Spleen (tissue), 13 donors: ENCODE measurements at regions of chr5 and their contacts with region 1.

Region 1: DNA sequence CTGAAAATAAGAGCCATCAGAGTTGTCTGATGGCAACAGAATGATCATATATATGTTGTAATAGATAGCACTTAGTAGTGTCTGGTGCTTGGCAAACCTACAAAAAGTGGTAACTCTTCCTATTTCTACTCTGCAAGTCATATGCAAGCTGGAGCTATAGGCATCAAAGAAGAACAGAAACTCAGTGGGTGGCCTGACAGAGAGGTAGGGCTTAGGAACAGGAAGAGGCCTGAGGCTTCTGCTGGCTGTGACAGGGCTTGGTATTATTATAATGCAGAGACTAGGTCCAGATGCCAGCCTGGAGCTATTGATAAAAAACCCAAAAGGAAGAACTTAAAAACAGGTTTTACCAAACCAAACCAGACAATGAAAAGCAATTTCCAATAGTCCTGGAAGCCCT is 4.4 kb upstream of the DIAPH1 start:
- DNase-seq: no peak
- H3K4me3 ChIP-seq: no peak overlapping the region
- H3K27ac ChIP-seq: peak overlapping the region in 6 of 8 donors; percentile 27 to 78 (median 74)
- H3K4me1 ChIP-seq: peaks cover 0 to 35% (median 22%) of the 10 kb centered on the region in 6 donors
- H3K27me3 ChIP-seq: no peaks in the 10 kb centered on the region
- CTCF ChIP-seq: no peak
- POLR2A ChIP-seq: no peak

Region 2: GRCh38 chr5:141369994-141370848 is 253.0 kb before region 1 on chr5 and contains the start of gene PCDHGB3:
- intact Hi-C with region 1: no loop called
- DNase-seq: no peak
- H3K4me3 ChIP-seq: peak within 1 kb of the TSS in 5 of 8 donors; percentile 15 to 61 (median 23)
- H3K27ac ChIP-seq: no peak within 1 kb of the TSS
- H3K4me1 ChIP-seq: no peaks in the 10 kb centered on the region
- H3K27me3 ChIP-seq: peaks cover 0 to 97% (median 21%) of the 10 kb centered on the region in 7 donors
- CTCF ChIP-seq: peak in 3 of 11 experiments; percentile 10 to 30 (median 21)
- POLR2A ChIP-seq: no peak
- total RNA-seq, gene PCDHGB3: 1.3 to 5.0 (median 3.9) TPM

Region 3: GRCh38 chr5:141517880-141518617 is 105.1 kb before region 1 on chr5:
- intact Hi-C with region 1: no loop called
- DNase-seq: peak; percentile 21
- H3K4me3 ChIP-seq: no peak overlapping the region
- H3K27ac ChIP-seq: peak overlapping the region in 4 of 8 donors; percentile 13 to 87 (median 44)
- H3K4me1 ChIP-seq: peaks cover 16 to 100% (median 63%) of the 10 kb centered on the region in 6 donors
- H3K27me3 ChIP-seq: no peaks in the 10 kb centered on the region
- CTCF ChIP-seq: no peak
- POLR2A ChIP-seq: no peak

Region 4: DNA sequence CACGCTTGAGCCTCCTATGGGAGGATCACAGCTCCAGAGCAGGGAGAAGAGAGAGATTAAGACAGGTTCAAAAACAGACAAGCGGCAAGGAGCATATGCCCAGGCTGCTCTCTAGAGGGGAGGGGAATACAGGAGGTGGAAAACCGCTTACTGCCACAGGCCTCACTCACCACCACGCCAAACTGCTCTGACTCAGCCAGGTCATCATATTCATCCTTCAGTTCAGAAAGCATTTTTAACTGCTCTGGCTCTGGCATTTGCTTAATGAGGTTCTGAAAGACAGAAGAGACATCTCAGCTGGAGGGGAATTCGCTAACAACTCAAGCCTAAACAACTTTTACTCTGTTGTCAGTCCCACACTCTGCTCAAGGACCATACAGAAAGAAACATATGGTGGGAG is 94.2 kb before region 1 on chr5:
- intact Hi-C with region 1: no loop called
- DNase-seq: no peak
- H3K4me3 ChIP-seq: no peak overlapping the region
- H3K27ac ChIP-seq: peak overlapping the region in 5 of 8 donors; percentile 0 to 45 (median 29)
- H3K4me1 ChIP-seq: peaks cover 7 to 48% (median 27%) of the 10 kb centered on the region in 6 donors
- H3K27me3 ChIP-seq: no peaks in the 10 kb centered on the region
- CTCF ChIP-seq: no peak
- POLR2A ChIP-seq: no peak

Region 5: DNA sequence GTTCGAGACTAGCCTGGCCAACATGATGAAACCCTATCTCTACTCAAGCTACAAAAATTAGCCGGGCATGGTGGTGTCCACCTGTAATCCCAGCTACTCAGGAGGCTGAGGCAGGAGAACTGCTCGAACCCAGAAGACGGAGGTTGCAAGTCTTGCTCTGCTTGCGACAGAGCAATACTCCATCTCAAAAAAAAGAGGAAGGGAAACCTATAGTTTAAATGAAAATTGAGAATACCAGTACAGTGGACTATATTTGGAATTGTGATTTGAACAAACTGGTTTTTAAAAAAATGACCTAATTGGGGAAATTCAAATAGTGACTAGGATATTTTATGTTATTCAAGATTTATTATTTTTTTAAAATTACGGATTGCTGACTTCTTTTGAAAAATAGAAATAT is 37.6 kb before region 1 on chr5:
- intact Hi-C with region 1: loop called (anchors 5 kb)
- DNase-seq: no peak
- H3K4me3 ChIP-seq: no peak overlapping the region
- H3K27ac ChIP-seq: no peak overlapping the region
- H3K4me1 ChIP-seq: peaks cover 0 to 47% (median 5%) of the 10 kb centered on the region in 6 donors
- H3K27me3 ChIP-seq: no peaks in the 10 kb centered on the region
- CTCF ChIP-seq: no peak
- POLR2A ChIP-seq: no peak

Region 6: DNA sequence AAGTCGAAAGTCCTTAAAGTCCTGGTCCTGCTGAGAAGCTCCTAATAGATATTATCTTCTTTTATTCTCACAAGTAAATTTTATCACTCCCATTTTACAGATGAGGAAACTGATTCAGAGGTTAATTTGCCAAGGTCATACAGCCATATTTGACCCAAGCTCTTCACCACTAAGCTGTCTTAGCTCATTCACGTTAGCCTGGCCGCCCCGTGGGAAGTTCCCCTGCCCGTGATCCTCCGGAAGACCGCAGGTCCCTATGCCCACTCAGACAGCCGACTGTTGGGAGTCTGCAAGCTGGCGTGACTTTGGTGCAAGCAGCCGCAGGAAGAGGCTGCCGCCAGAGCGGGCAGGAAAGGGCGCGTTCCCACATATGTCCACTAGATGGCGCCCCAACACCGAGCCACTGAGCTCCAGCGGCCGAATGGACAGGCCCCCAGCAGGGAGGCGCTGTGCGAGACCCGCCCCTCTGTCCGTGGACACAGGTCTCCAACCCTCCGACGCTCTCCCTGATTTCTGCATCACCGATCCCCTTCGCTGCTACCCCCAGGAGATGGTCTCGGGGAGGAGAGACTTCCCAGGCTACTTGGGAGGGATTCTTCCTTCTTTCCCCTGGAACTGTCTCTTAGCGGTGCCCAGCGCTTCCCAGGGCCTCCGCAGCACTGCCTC is 68.8 kb after region 1 on chr5:
- intact Hi-C with region 1: no loop called
- DNase-seq: peak; percentile 97
- H3K4me3 ChIP-seq: peak overlapping the region in 7 of 8 donors; percentile 11 to 59 (median 34)
- H3K27ac ChIP-seq: peak overlapping the region in 1 of 8 donors; percentile 8
- H3K4me1 ChIP-seq: peaks cover 3 to 21% (median 12%) of the 10 kb centered on the region in 6 donors
- H3K27me3 ChIP-seq: peaks cover 0 to 27% (median 0%) of the 10 kb centered on the region in 7 donors
- CTCF ChIP-seq: peak; percentile 96 to 100 (median 99)
- POLR2A ChIP-seq: no peak